ENCODE measurements at regions of chr22 and their contacts with region 1.

Region 1: GRCh38 chr22:45096256-45096907 is 67.3 kb upstream of the NUP50 start:
- DNase-seq: peak in 1 of 2 donors; percentile 40
- ATAC-seq: peak in 6 of 8 donors; percentile 38 to 68 (median 56)
- H3K4me3 ChIP-seq: no peak overlapping the region
- H3K27ac ChIP-seq: no peak overlapping the region
- H3K4me1 ChIP-seq: no peaks in the 10 kb centered on the region
- H3K27me3 ChIP-seq: peaks cover 0 to 86% (median 75%) of the 10 kb centered on the region in 7 donors
- CTCF ChIP-seq: peak; percentile 48 to 85 (median 73)

Region 2: DNA sequence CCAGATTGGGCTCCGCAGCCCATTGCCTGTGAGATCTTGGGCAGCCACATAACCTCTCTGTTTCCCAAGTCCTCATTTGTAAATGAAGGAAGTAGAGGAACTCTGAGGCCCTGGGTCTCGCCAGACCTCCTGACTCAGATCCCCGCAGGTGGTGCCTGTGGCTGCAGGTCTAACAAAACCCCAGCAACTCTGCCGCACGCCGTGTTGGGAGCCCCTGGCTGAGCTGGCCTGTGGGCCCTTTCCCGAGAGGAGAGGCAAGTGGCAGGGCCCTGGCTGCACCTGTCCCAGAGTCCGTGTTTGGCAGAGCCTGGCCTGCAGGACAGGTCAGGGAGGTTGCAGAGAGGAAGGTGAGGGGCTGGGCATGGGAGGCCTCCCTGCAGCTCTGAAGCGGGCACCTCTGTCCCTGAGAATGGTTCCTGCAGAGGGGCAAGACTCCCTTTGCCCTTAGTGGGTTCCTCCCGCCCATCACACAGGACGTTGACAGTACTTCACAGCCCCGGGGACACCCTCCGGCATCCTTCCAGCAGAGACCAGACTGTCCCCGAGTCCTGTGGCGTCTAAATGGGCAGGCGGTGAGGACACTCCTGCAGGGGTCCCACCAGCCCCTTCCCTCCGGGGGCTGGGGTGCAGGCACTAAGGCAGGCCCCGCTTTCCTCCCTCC is 276.3 kb before region 1 on chr22:
- intact Hi-C with region 1: loop called (anchors 1 to 10 kb)
- DNase-seq: no peak
- ATAC-seq: peak in 2 of 8 donors; percentile 19 to 28
- H3K4me3 ChIP-seq: no peak overlapping the region
- H3K27ac ChIP-seq: no peak overlapping the region
- H3K4me1 ChIP-seq: peaks cover 0 to 4% (median 0%) of the 10 kb centered on the region in 9 donors
- H3K27me3 ChIP-seq: peaks cover 0 to 26% (median 10%) of the 10 kb centered on the region in 7 donors
- CTCF ChIP-seq: no peak

Region 3: GRCh38 chr22:44828193-44828592 is 268.2 kb before region 1 on chr22:
- intact Hi-C with region 1: loop called in 8 of 10 experiments (anchors 5 to 10 kb)
- DNase-seq: no peak
- ATAC-seq: no peak
- H3K4me3 ChIP-seq: no peak overlapping the region
- H3K27ac ChIP-seq: no peak overlapping the region
- H3K4me1 ChIP-seq: no peaks in the 10 kb centered on the region
- H3K27me3 ChIP-seq: peaks cover 0 to 6% (median 0%) of the 10 kb centered on the region in 7 donors
- CTCF ChIP-seq: peak in 6 of 9 donors; percentile 6 to 40 (median 20)

Region 4: DNA sequence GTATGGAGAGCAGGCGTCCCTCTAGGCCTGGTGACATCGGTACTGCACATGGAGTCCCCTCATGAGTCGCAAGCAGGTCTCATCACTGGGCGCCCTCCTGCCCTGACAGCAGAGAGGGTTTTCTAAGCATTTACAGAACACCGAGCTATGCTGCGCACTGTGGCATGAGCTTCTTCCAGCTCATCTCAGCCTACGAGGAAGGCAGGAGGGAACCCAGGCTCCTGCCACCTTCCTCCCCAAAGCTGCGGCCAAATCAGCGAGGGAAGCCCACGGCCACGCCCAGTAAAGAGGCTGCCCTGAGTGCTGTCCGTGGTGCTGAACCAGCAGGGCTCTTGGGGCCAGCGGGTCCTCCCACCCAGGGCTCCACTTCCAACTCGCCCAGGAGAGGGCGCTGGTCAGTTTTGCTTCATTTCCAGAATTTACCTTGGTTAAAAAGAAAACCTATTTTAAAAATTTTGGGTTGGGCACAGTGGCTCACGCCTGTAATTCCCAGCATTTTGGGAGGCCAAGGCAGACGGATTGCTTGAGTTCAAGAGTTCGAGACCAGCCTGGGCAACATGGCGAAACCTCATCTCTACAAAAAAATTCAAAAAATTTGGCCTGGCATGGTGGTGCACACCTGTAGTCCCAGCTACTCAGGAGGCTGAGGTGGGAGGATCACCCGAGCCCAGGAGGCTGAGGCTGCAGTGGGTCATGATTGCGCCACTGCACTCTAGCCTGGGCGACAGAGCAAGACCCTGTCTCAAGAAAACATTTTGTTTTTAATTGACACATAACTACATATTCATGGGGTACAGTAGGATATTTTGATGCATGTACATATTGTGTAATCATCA is 120.7 kb before region 1 on chr22:
- intact Hi-C with region 1: loop called in 3 of 10 experiments (anchors 5 to 10 kb)
- DNase-seq: peak; percentile 80 to 82
- ATAC-seq: peak; percentile 76 to 94 (median 90)
- H3K4me3 ChIP-seq: no peak overlapping the region
- H3K27ac ChIP-seq: no peak overlapping the region
- H3K4me1 ChIP-seq: no peaks in the 10 kb centered on the region
- H3K27me3 ChIP-seq: peaks cover 0 to 31% (median 10%) of the 10 kb centered on the region in 7 donors
- CTCF ChIP-seq: peak; percentile 22 to 75 (median 69)

Region 5: GRCh38 chr22:45483918-45484499 is 387.6 kb after region 1 on chr22:
- intact Hi-C with region 1: no loop called
- DNase-seq: no peak
- ATAC-seq: no peak
- H3K4me3 ChIP-seq: no peak overlapping the region
- H3K27ac ChIP-seq: no peak overlapping the region
- H3K4me1 ChIP-seq: no peaks in the 10 kb centered on the region
- H3K27me3 ChIP-seq: peaks cover 0 to 5% (median 0%) of the 10 kb centered on the region in 7 donors
- CTCF ChIP-seq: no peak

Region 6: DNA sequence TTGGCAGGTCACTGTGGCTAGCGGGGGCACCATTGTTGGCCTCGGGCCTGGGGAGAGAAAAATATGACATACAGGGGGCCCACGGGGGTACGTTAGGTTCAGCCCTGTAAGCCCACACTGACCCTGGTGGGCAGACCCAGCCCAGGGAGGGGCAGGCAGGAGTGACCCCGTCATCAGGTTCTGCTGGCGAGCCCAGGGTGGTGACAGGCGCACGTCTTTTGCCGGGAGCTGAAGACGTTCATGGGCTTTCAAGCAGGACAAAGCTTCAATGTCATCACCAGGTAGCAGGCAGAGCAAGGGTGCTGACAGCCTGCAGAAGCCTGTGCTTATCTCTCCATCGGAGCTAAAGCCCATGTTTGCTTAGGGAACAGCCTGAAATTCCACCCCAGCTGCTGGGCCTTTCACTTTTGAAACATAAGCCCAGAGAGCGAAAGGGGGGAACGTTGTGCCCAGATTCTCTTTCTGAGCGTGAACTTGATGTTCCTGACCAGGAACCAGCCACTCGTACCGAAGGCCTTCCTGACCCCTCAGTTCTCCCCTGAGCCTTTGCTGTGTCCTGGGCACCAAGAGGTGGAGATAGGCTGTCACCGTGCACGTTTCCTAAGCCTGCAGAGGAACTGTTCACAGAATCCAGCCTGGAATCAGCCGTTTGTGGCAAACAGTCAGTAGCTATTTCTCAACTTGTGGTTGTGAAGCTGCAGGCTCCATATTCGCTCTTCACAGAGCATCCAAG is 501.2 kb after region 1 on chr22:
- intact Hi-C with region 1: no loop called
- DNase-seq: no peak
- ATAC-seq: peak in 3 of 8 donors; percentile 21 to 54 (median 54)
- H3K4me3 ChIP-seq: no peak overlapping the region
- H3K27ac ChIP-seq: no peak overlapping the region
- H3K4me1 ChIP-seq: peaks cover 0 to 6% (median 0%) of the 10 kb centered on the region in 9 donors
- H3K27me3 ChIP-seq: peaks cover 0 to 3% (median 0%) of the 10 kb centered on the region in 7 donors
- CTCF ChIP-seq: no peak

Measured in heart right ventricle (tissue), 16 donors.